Body of pancreas (tissue), 4 donors: ENCODE measurements at regions of chr19 and their contacts with region 1.

Region 1: GRCh38 chr19:35929876-35930275 is 6.3 kb upstream of the LRFN3 start:
- DNase-seq: no peak
- ATAC-seq: no peak
- H3K4me3 ChIP-seq: no peak overlapping the region
- H3K27ac ChIP-seq: no peak overlapping the region
- H3K4me1 ChIP-seq: peaks cover 3% of the 10 kb centered on the region
- H3K27me3 ChIP-seq: no peaks in the 10 kb centered on the region
- CTCF ChIP-seq: no peak
- POLR2A ChIP-seq: no peak

Region 2: GRCh38 chr19:35889370-35890112 is 40.3 kb before region 1 on chr19:
- intact Hi-C with region 1: loop called (anchors 5 kb)
- DNase-seq: no peak
- ATAC-seq: no peak
- H3K4me3 ChIP-seq: no peak overlapping the region
- H3K27ac ChIP-seq: no peak overlapping the region
- H3K4me1 ChIP-seq: no peaks in the 10 kb centered on the region
- H3K27me3 ChIP-seq: no peaks in the 10 kb centered on the region
- CTCF ChIP-seq: no peak
- POLR2A ChIP-seq: no peak

Region 3: DNA sequence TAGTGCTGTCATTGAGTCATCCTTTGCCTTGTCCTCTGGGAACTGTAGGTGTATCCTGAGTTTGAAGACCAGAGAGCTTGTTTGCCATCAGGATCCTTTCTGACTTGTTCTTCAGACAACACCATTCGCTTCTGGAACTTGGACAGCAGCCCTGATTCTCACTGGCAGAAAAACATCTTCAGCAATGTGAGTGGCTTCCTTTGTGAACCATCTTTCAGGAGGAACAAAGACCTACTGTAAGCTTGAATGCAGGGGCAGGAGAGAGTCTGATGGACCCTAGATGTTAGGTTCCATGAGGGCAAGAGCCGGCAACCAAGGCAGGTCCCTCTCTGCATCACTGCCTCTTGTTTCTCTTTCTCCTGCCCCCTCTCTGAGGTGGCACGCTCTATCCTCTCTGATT is 151.5 kb after region 1 on chr19:
- intact Hi-C with region 1: no loop called
- DNase-seq: no peak
- ATAC-seq: no peak
- H3K4me3 ChIP-seq: no peak overlapping the region
- H3K27ac ChIP-seq: no peak overlapping the region
- H3K4me1 ChIP-seq: no peaks in the 10 kb centered on the region
- H3K27me3 ChIP-seq: no peaks in the 10 kb centered on the region
- CTCF ChIP-seq: no peak
- POLR2A ChIP-seq: no peak

Region 4: DNA sequence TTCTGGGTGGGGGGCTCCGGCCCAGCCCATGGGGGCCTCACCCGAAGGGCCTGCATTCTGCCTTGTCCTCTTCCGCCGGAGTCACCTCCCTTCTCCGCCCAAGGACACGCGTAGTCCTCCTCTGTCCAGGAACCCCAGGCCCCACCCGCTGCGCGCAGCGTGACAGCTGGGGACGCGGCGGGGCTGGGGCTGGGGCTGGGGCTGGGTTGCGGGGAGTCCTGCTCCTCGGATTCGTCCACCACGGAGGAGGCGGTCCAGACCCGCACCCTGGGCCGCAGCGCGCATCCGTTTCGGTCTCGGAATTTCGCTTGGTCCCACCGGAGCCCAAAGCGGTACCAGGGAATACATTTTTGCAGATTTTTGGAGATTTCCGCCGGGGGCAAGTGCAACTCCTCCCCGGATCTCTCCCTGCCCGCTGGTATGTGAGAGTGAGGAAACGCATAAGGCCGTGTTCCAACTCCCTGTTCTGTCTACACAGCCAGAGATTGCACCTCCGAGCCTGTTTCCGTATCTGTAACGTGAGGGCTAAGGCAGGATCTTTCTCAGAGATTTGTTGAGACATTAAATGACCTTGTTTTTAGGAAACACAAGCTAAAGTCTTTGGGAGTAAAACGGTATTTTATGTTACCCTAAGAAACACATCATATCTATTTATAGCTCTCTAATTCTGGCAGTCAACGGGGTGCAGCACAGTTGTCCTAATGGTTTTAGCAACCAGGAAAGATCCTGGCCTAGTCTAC is 222.6 kb after region 1 on chr19 and contains the start of gene COX7A1:
- intact Hi-C with region 1: no loop called
- DNase-seq: peak; percentile 46 to 62 (median 52)
- ATAC-seq: peak; percentile 74
- H3K4me3 ChIP-seq: peak within 1 kb of the TSS in 1 of 2 donors; percentile 31
- H3K27ac ChIP-seq: peak within 1 kb of the TSS; percentile 56 to 80 (median 73)
- H3K4me1 ChIP-seq: peaks cover 4% of the 10 kb centered on the region
- H3K27me3 ChIP-seq: no peaks in the 10 kb centered on the region
- CTCF ChIP-seq: no peak
- POLR2A ChIP-seq: peak; percentile 25 to 43 (median 27)
- total RNA-seq, gene COX7A1: 1.6 to 29.0 TPM